BJ (cell line): ENCODE measurements at regions of chr3 and their contacts with region 1.

Region 1: DNA sequence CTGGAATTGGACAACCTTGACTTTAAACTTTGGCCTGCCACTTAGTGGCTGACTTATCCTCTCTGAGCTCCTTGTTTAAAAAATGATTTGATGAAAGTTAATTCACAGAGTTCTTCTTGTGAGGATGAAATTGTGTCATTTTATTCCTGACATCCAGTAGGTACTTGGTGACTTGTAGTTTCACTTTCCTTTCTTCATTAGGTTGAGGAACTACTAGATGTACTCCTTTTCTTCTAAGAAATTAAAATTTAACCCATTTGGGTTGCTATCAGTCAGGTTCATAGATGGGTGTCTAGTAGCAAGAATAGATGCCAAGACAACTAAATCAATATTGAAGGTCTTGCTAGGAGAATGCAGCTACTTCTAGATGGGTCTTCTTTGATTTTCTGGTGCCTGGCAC is 5.2 kb downstream of the NR1D2 start:
- DNase-seq: no peak
- H3K4me3 ChIP-seq: no peak overlapping the region
- H3K27me3 ChIP-seq: no peaks in the 10 kb centered on the region
- CTCF ChIP-seq: no peak

Region 2: GRCh38 chr3:23304424-23304823 is 645.9 kb before region 1 on chr3:
- CTCF ChIA-PET with region 1: no interaction called
- POLR2A ChIA-PET with region 1: interaction called, 13 read pairs
- DNase-seq: peak; percentile 52
- H3K4me3 ChIP-seq: no peak overlapping the region
- H3K27me3 ChIP-seq: no peaks in the 10 kb centered on the region
- CTCF ChIP-seq: no peak